Activated B cell treated with CpG ODN at 0.5 μM for 24 hours (primary cell): ENCODE measurements at regions of chr21 and their contacts with region 1.

Region 1: GRCh38 chr21:37366482-37367316 is at the start of gene DYRK1A:
- DNase-seq: peak; percentile 97
- ATAC-seq: peak; percentile 82
- H3K4me3 Mint-ChIP-seq: peak within 1 kb of the TSS; percentile 99
- H3K27ac Mint-ChIP-seq: peak within 1 kb of the TSS; percentile 99
- H3K4me1 Mint-ChIP-seq: peaks cover 52% of the 10 kb centered on the region
- H3K27me3 Mint-ChIP-seq: no peaks in the 10 kb centered on the region
- CTCF ChIP-seq: no peak
- total RNA-seq, gene DYRK1A: 93.4 and 99.9 TPM in 2 replicates

Region 2: DNA sequence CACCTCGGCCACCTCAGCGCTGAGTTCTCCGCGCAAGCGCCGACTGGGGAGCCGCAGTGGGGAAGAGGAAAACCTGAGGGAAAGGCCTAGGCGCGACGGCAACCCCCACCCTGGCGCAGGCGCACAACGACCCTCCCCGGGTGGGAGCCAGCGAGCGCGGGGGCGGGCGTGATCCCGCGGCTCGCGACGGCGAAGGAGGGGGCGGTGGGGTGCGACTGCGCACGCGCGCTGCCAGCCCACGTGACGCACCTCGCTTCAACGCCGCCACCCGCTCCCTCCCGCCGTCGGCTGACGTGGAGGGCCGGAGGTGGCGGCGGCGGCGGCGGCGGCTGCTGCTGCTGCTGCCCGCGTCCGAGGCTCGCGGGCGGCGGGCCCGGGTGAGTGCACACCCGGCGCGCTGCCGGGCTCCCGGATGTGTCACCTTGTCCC is 293.7 kb before region 1 on chr21 and contains the starts of genes PIGP and TTC3:
- CTCF ChIA-PET with region 1: no interaction called
- POLR2A ChIA-PET with region 1: no interaction called
- intact Hi-C with region 1: loop called (anchors 1 kb)
- DNase-seq: peak; percentile 99
- ATAC-seq: peak; percentile 63
- H3K4me3 Mint-ChIP-seq: peak within 1 kb of the TSS; percentile 87
- H3K27ac Mint-ChIP-seq: peak within 1 kb of the TSS; percentile 93
- H3K4me1 Mint-ChIP-seq: peaks cover 44% of the 10 kb centered on the region
- H3K27me3 Mint-ChIP-seq: no peaks in the 10 kb centered on the region
- CTCF ChIP-seq: no peak
- total RNA-seq, gene PIGP: 17.3 and 17.7 TPM in 2 replicates
- total RNA-seq, gene TTC3: 61.1 and 69.8 TPM in 2 replicates

Region 3: DNA sequence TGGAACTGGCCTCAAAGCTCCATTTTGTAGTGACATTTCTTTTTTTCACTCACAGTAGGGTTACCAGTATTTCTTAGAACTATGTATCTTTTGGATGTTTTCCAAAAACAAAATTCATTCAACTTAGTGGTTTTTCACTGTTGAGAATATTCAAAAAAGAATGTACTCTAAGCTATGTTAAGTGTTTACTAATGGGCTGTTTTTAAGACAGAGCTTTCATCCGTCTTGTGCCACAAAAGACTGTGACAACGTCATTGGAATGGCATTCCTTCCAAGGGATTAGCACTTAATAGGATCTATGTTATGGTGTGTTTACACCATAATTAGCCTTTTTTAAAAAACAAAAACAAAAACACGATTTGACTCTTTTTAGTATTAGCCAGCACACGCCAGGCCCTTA is 226.8 kb before region 1 on chr21:
- CTCF ChIA-PET with region 1: no interaction called
- POLR2A ChIA-PET with region 1: no interaction called
- intact Hi-C with region 1: no loop called
- DNase-seq: no peak
- ATAC-seq: no peak
- H3K4me3 Mint-ChIP-seq: no peak overlapping the region
- H3K27ac Mint-ChIP-seq: no peak overlapping the region
- H3K4me1 Mint-ChIP-seq: no peaks in the 10 kb centered on the region
- H3K27me3 Mint-ChIP-seq: no peaks in the 10 kb centered on the region
- CTCF ChIP-seq: no peak

Region 4: DNA sequence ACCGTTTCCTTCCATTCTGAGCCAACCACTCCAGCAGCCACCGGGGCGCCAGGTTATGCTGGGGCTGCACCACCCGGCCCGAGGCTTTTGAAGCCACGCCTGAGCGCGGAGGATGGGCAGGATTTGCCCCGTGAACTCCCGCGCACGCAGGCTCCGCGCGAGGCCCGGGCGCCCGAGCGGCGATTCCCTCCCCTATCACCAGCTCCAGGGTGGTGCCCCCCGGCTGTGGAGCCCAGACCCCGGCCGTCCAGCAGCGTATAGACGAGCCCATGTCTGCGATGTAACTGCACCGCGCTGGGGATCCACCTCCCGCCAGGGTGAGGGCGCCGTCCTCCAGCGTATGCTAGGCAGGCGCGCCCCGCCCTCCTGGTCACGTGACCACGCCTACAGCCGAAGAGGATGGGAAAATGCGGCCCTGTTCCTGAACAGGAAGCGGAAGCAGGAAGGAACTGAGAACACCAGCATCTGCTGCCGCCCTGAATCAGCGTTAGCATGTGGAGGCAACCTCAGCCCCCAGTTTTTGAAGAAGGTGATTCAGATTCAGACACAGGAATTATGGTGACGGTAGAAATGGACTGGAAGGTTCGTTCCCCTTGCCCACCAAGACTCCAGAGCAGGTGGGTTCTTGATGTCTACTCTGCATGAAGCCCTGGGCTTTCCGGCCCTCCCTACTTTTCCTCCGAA is 145.6 kb before region 1 on chr21:
- CTCF ChIA-PET with region 1: no interaction called
- POLR2A ChIA-PET with region 1: interaction called, 11 read pairs
- intact Hi-C with region 1: loop called (anchors 1 kb)
- DNase-seq: peak; percentile 90
- ATAC-seq: peak; percentile 87
- H3K4me3 Mint-ChIP-seq: peak overlapping the region; percentile 91
- H3K27ac Mint-ChIP-seq: peak overlapping the region; percentile 88
- H3K4me1 Mint-ChIP-seq: peaks cover 31% of the 10 kb centered on the region
- H3K27me3 Mint-ChIP-seq: no peaks in the 10 kb centered on the region
- CTCF ChIP-seq: no peak

Region 5: GRCh38 chr21:37391666-37392065 is 25.0 kb after region 1 on chr21:
- CTCF ChIA-PET with region 1: interaction called, 3 read pairs
- POLR2A ChIA-PET with region 1: no interaction called
- intact Hi-C with region 1: loop called (anchors 2 kb)
- DNase-seq: no peak
- ATAC-seq: no peak
- H3K4me3 Mint-ChIP-seq: no peak overlapping the region
- H3K27ac Mint-ChIP-seq: no peak overlapping the region
- H3K4me1 Mint-ChIP-seq: peaks cover 87% of the 10 kb centered on the region
- H3K27me3 Mint-ChIP-seq: no peaks in the 10 kb centered on the region
- CTCF ChIP-seq: no peak

Region 6: GRCh38 chr21:37435120-37435519 is 68.4 kb after region 1 on chr21:
- CTCF ChIA-PET with region 1: no interaction called
- POLR2A ChIA-PET with region 1: no interaction called
- intact Hi-C with region 1: loop called (anchors 1 kb)
- DNase-seq: no peak
- ATAC-seq: peak; percentile 95
- H3K4me3 Mint-ChIP-seq: no peak overlapping the region
- H3K27ac Mint-ChIP-seq: no peak overlapping the region
- H3K4me1 Mint-ChIP-seq: peaks cover 43% of the 10 kb centered on the region
- H3K27me3 Mint-ChIP-seq: no peaks in the 10 kb centered on the region
- CTCF ChIP-seq: no peak

Region 7: GRCh38 chr21:37563641-37564340 is 197.1 kb after region 1 on chr21:
- CTCF ChIA-PET with region 1: no interaction called
- POLR2A ChIA-PET with region 1: interaction called, 15 read pairs
- intact Hi-C with region 1: loop called (anchors 1 kb)
- DNase-seq: peak; percentile 86
- ATAC-seq: peak; percentile 88
- H3K4me3 Mint-ChIP-seq: peak overlapping the region; percentile 93
- H3K27ac Mint-ChIP-seq: peak overlapping the region; percentile 96
- H3K4me1 Mint-ChIP-seq: peaks cover 21% of the 10 kb centered on the region
- H3K27me3 Mint-ChIP-seq: no peaks in the 10 kb centered on the region
- CTCF ChIP-seq: no peak

Region 8: DNA sequence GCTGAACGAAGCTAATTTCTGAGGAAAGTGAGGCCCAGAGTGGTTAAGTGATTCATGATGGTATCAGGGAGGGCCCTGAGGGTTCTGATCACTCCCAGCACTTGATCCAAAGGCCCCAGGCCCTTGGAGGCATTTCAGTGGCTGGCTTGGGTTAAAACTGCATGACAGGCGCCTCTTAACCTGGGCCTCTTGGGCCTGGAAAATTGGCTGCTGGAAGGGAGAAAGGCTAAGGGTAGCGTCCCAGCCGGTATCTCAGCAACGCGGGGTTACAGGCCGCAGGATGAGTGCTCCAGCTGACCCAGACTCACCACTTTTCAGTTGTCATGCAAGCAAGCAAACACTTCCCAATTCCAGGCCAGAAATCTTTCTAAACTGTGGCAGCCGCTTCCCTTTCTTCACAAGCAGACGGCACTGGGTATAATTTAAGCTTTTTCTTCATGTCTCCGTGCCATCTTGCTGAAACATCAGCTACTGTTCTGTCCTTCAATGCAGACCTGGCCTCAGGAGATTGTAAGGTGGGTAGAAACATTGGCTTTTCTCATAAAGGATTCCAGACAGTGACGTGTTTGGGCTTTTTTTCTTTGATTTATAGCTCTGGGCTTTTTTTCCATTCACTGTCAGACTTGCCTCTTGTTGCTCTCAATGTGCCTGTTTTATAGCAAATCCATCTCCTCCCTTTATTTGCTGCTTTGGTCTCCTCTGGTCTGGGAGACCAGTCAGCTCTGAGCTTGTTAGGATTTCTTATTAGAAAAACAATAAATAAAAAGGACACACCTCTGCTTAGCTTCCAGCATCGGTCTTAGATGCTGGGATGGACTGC is 320.5 kb after region 1 on chr21:
- CTCF ChIA-PET with region 1: no interaction called
- POLR2A ChIA-PET with region 1: no interaction called
- intact Hi-C with region 1: no loop called
- DNase-seq: no peak
- ATAC-seq: no peak
- H3K4me3 Mint-ChIP-seq: no peak overlapping the region
- H3K27ac Mint-ChIP-seq: no peak overlapping the region
- H3K4me1 Mint-ChIP-seq: peaks cover 7% of the 10 kb centered on the region
- H3K27me3 Mint-ChIP-seq: peaks cover 7% of the 10 kb centered on the region
- CTCF ChIP-seq: no peak

Region 9: DNA sequence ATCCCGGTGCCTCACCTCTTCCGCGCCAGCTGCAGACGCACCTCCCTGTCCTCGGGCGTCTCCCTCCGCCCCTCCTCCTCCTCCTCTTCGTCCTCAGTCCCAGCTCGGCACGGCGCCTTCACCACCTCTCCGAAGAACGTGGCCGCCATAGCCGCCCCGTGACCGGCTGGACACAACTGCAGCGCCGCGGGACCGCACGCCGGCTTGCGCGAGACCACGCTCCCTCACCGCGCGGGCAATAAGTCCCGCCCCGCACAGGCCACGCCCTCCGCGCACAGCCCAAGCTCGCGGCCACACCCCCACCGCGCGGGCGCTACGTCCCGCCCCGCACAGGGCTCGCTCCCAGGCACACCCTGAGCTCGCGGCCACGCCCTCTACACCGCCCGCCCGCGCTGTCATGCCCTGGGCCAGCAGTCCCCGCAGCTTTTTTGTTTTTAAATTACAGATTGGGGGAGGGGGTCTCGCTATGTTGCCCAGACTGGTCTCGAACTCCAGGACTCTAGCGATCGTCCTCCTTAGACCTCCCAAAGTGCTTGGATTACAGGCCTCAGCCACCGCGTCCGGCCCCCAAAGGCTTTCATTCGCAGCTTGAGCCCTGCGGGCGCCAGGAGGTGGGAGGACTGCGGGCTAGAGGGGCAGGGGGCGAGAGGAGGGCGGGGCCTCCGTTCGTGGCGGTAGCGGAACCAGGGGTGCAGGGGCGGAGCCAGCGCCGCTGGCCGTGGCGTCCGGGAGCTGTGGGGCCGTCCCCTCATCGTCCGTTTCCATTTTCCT is 1816.7 kb after region 1 on chr21 and contains the start of gene PSMG1:
- CTCF ChIA-PET with region 1: no interaction called
- POLR2A ChIA-PET with region 1: interaction called, 3 read pairs
- intact Hi-C with region 1: loop called (anchors 2 kb)
- DNase-seq: peak; percentile 97
- ATAC-seq: peak; percentile 91
- H3K4me3 Mint-ChIP-seq: peak within 1 kb of the TSS; percentile 98
- H3K27ac Mint-ChIP-seq: peak within 1 kb of the TSS; percentile 94
- H3K4me1 Mint-ChIP-seq: peaks cover 20% of the 10 kb centered on the region
- H3K27me3 Mint-ChIP-seq: no peaks in the 10 kb centered on the region
- CTCF ChIP-seq: no peak
- total RNA-seq, gene PSMG1: 23.7 and 28.4 TPM in 2 replicates